K562 (cell line): ENCODE measurements at regions of chr13 and their contacts with region 1.

Region 1: DNA sequence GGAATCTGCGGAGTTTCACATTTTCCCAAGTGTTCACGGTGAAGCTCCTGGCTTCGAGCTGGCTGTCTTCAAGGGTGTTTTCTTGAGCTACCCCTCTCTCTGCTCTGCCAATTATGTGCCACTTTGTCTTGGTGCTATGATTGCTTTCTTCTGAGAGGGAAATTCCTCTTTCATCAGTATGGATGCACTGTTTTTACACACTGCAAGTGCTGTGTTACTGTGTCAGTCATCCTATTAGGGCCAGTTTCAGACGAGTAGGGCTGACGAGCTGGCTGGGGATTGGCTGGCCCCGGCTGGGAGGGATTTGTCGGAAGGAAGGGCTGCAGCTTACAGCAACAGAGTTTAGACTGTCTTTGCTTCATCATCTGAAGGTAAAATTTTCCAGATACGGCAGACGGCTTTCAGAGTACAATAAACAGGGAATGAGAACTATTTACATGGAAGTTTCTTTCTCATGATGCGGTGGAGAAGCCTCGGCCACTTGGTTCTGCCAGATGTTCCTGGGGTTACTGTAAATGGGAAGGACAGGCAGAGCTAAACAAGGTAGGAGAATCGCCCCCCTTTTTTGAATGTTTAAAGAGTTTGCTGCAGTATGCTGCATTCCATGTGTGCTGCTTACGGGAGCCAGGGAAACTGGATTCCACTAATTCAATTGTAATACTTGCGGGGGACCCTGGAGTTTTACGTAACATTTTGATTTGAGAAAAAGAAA is at the start of gene MBNL2:
- DNase-seq: peak; percentile 79 to 89 (median 83)
- ATAC-seq: peak; percentile 89
- H3K4me3 ChIP-seq: peak within 1 kb of the TSS; percentile 63
- H3K27ac ChIP-seq: peak within 1 kb of the TSS; percentile 81
- H3K4me1 ChIP-seq: peaks cover 0 to 19% of the 10 kb centered on the region in 2 experiments; a peak in 3 of 5 replicates
- H3K27me3 ChIP-seq: no peaks in the 10 kb centered on the region
- CTCF ChIP-seq: no peak
- EP300 ChIP-seq: no peak
- POLR2A ChIP-seq: peak; percentile 78
- RAD21 ChIP-seq: no peak
- polyA plus RNA-seq, gene MBNL2: 7.0 to 10.5 TPM

Region 2: GRCh38 chr13:97249093-97249795 is 27.1 kb after region 1 on chr13:
- CTCF ChIA-PET with region 1: no interaction called
- POLR2A ChIA-PET with region 1: interaction called, 15 read pairs
- in situ Hi-C with region 1: no loop called
- intact Hi-C with region 1: no loop called
- DNase-seq: no peak
- ATAC-seq: peak; percentile 21
- H3K4me3 ChIP-seq: no peak overlapping the region
- H3K27ac ChIP-seq: peak overlapping the region; percentile 75
- H3K4me1 ChIP-seq: peaks cover 0 to 10% of the 10 kb centered on the region in 2 experiments; a peak in 4 of 5 replicates
- H3K27me3 ChIP-seq: no peaks in the 10 kb centered on the region
- CTCF ChIP-seq: no peak
- EP300 ChIP-seq: no peak
- POLR2A ChIP-seq: no peak
- RAD21 ChIP-seq: no peak

Region 3: GRCh38 chr13:97257800-97258799 is 36.0 kb after region 1 on chr13:
- CTCF ChIA-PET with region 1: no interaction called
- POLR2A ChIA-PET with region 1: interaction called, 12 read pairs
- in situ Hi-C with region 1: no loop called
- intact Hi-C with region 1: loop called (anchors 1 kb)
- DNase-seq: peak; percentile 64 to 81 (median 69)
- ATAC-seq: peak; percentile 70
- H3K4me3 ChIP-seq: no peak overlapping the region
- H3K27ac ChIP-seq: peak overlapping the region; percentile 100
- H3K4me1 ChIP-seq: peaks cover 30 to 76% of the 10 kb centered on the region in 2 experiments
- H3K27me3 ChIP-seq: no peaks in the 10 kb centered on the region
- CTCF ChIP-seq: peak; percentile 28 to 42 (median 32); a peak in 4 of 6 replicates
- EP300 ChIP-seq: peak; percentile 75
- POLR2A ChIP-seq: no peak
- RAD21 ChIP-seq: peak in 1 of 2 experiments; percentile 14; a peak in 1 of 4 replicates

Region 4: DNA sequence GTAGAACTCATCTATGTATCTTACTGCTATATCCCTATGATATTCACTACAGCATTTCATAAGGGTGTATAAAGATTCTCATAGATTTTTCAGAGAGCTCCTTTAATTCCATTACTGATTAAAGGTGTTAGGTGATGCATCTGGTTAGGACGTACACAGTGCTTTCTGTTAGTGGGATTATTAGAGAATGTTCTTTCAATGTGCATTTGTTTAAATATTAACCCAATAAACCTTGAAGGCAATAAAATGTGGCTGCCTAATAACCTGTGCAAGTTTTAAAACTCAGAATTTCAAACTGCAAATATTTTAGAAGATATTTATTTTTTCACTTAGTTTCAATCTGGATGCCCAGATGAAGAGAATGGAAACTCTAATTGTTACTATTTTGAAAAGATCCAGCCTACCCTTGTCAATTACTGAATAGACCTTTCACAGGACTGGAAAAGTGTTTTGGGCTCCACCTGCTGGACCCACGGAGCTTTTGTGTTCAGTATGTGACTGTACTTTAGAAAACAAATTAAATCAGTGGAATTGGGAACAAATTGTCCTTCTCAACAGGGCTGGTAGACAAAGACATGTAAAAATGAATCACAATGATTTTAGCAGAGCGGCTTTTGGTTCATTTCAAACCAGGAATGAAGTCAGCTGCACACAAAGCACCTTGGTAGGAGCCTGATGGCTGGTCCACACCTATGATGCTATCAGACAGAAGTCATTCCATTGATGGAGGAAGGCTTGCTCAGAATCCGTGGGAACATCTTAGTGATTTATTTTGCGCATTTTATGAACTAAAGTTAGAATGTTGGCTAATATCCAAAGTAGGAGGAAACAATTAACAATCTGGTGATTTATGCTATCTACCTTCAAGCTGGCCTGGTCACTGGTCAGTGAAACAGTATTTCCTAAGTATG is 122.4 kb after region 1 on chr13:
- CTCF ChIA-PET with region 1: no interaction called
- POLR2A ChIA-PET with region 1: no interaction called
- in situ Hi-C with region 1: no loop called
- intact Hi-C with region 1: loop called (anchors 5 kb)
- DNase-seq: peak in 2 of 4 experiments; percentile 22 to 60
- ATAC-seq: peak; percentile 89
- H3K4me3 ChIP-seq: no peak overlapping the region
- H3K27ac ChIP-seq: no peak overlapping the region
- H3K4me1 ChIP-seq: peaks cover 3 to 5% of the 10 kb centered on the region in 2 experiments; a peak in 2 of 5 replicates
- H3K27me3 ChIP-seq: no peaks in the 10 kb centered on the region
- CTCF ChIP-seq: peak; percentile 29 to 60 (median 53); a peak in 5 of 6 replicates
- EP300 ChIP-seq: no peak
- POLR2A ChIP-seq: no peak
- RAD21 ChIP-seq: peak; percentile 41 to 61; a peak in 3 of 4 replicates

Region 5: DNA sequence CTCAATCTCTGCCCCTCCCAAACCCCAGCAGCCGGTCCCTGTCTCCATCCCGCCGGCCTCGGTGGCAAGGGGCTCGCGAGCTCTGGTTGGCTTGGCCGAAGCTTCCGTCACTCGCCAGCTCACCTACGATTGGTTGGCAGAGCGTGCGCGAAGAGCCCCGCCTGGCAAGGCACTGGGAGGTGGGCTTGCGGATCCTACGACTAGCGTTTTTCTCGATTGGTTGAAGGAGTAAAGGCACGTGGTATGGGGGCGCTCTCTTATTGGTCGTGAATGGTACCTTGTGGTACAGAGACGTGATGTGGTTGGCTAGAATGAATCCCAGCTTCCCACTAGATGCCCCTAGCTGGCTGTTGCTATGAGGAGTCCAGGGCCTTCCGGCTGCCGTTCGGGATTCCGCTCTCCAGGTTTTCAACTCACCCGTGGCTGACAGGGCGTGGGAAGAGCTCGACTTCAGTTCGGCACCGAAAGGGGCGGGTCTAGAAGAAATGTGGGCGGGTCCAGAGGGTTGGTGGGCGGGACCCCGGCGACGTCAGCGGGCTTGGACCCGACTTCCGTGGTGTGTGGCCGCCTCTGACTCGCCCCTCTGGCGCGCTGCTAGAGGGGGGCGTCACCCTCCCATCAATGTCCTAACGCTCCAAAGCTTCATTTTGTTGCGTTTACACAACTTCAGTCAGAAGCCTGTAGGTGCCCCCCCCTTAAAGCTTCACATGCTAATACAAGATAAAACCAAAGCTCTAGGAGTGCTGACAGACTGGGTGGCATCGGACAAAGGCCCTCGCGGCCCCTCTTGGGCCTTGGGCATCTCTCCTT is 211.0 kb after region 1 on chr13:
- CTCF ChIA-PET with region 1: no interaction called
- POLR2A ChIA-PET with region 1: interaction called, 3 read pairs
- in situ Hi-C with region 1: no loop called
- intact Hi-C with region 1: loop called (anchors 10 kb)
- DNase-seq: peak; percentile 81 to 88 (median 84)
- ATAC-seq: peak; percentile 91
- H3K4me3 ChIP-seq: peak overlapping the region; percentile 49
- H3K27ac ChIP-seq: peak overlapping the region; percentile 85
- H3K4me1 ChIP-seq: peaks cover 6 to 16% of the 10 kb centered on the region in 2 experiments; a peak in 4 of 5 replicates
- H3K27me3 ChIP-seq: no peaks in the 10 kb centered on the region
- CTCF ChIP-seq: no peak
- EP300 ChIP-seq: no peak
- POLR2A ChIP-seq: peak; percentile 69; the same call in 1 of the 2 replicates
- RAD21 ChIP-seq: no peak